ENCODE measurements at regions of chr10 and their contacts with region 1.

Region 1: DNA sequence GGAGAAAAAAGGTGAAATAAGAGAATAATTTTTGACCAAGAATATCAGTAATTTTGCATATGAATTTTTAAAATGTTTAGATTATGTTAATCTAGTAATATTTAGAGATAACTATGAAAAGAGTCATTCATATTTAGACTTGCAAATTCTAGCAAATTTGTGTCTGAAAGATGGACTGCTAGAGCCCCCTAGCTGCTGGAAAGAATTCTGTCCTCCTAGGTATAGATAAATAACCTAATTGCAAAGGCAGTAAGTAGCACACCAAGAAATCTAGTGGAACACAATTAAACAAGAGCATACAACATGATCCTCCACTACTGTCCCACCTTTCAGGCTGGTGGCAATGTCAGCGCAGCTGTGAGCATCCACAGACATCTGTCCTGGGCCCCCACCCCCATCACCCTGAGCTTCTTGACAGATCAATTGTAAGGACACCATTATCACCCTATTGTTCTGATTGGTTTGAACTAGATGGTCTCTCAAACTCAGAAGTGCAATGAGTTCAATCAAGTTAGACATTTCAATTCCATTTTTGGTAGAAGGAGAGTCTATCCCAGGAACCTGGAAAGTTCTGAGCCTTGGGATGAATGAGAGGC is 15.0 kb upstream of the GFRA1 start:
- DNase-seq: no peak
- ATAC-seq: no peak

Region 2: DNA sequence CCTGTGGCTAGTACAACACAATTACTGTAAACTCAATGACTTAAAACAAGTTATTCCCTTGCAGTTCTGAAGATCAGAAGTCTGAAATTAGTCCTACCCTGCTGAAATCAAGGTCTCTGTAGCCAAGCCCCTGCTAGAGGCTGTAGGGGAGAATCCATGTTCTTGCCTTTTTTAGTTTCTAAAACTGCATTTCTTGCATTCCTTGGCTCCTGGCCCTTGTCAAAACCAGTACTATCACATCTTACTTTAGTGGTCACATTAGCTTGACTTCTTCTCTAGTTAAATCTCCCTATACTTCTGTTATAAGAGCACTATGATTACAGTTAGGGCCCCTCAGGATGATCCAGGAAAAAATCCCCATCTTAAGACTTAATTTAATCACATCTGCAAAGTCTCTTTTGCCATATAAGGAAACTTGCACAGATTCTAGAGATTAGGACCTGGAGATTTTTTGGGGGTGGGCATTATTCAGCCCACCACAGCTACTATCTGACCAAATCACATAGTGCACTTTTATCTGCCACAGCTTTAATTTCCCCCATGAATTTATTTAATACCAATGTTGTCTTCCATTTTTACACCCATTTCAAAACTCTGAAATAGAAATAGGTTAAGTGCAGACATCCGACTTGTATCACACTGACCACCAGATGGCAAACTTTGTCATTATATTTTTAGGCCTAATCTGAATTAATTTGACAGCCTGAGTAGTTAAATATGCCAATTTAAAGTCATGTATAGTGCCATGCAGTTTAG is 581.8 kb before region 1 on chr10:
- intact Hi-C with region 1: loop called (anchors 5 kb)
- DNase-seq: no peak
- ATAC-seq: no peak

Region 3: DNA sequence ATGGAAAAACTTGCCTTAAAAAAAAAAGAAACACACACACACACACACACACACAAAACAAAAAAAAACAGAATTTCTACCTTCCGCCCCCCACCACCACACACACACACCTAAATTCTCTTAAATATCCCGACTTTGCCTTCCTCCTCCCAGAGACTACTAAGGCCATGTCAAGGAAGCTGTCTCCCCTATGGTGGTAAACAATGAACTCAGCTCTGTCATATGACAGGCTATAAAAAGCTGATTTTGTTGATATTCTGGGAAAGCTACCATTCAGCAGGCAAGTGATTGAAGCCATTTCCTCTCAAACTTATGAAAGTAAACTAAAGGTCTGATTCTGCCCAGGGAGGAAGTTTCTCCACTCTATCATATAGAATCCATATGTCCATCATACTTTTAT is 486.0 kb before region 1 on chr10:
- intact Hi-C with region 1: loop called (anchors 1 kb)
- DNase-seq: no peak
- ATAC-seq: no peak

Region 4: GRCh38 chr10:115948465-115948864 is 339.5 kb before region 1 on chr10:
- intact Hi-C with region 1: loop called (anchors 10 kb)
- DNase-seq: no peak
- ATAC-seq: peak; percentile 28

Measured in Right ventricle myocardium inferior (tissue), 1 donor.